ENCODE measurements at regions of chr12 and their contacts with region 1.

Region 1: DNA sequence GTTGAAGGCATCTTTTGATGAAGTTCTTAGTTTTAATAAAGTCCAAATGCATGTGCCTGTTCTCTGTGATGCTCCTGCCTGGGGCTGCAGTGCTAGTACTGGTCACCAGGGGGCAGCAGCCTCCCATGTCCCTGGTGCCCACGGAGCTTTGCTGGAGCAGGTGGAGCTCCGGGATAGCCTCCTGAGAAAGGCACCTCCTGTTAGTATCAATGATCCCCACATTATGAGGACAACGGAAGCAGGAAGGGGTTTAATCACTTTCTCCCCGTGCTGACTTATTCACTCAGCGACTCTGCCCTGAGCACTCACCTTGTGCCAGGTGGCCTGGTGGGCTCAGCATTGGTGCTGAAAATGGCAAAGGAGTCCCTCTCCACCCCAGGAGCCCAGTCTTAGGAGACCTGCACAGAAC is 123.0 kb upstream of the PZP start:
- DNase-seq: peak; percentile 45 to 88 (median 87)
- ATAC-seq: peak; percentile 72 to 83
- H3K4me3 ChIP-seq: no peak overlapping the region
- H3K27ac ChIP-seq: no peak overlapping the region
- H3K4me1 ChIP-seq: no peaks in the 10 kb centered on the region
- H3K27me3 ChIP-seq: no peaks in the 10 kb centered on the region

Region 2: GRCh38 chr12:9198012-9198411 is 133.2 kb before region 1 on chr12:
- intact Hi-C with region 1: no loop called
- DNase-seq: no peak
- ATAC-seq: no peak
- H3K4me3 ChIP-seq: no peak overlapping the region
- H3K27ac ChIP-seq: no peak overlapping the region
- H3K4me1 ChIP-seq: no peaks in the 10 kb centered on the region
- H3K27me3 ChIP-seq: no peaks in the 10 kb centered on the region

Region 3: GRCh38 chr12:9464408-9464807 is 133.2 kb after region 1 on chr12:
- intact Hi-C with region 1: loop called in 2 of 4 experiments (anchors 5 to 10 kb)
- DNase-seq: no peak
- ATAC-seq: no peak
- H3K4me3 ChIP-seq: no peak overlapping the region
- H3K27ac ChIP-seq: no peak overlapping the region
- H3K4me1 ChIP-seq: no peaks in the 10 kb centered on the region
- H3K27me3 ChIP-seq: no peaks in the 10 kb centered on the region